Activated naive CD4-positive, alpha-beta T cell treated with anti-CD3 and anti-CD28 coated beads for 36 hours (primary cell): ENCODE measurements at regions of chr1 and their contacts with region 1.

Region 1: DNA sequence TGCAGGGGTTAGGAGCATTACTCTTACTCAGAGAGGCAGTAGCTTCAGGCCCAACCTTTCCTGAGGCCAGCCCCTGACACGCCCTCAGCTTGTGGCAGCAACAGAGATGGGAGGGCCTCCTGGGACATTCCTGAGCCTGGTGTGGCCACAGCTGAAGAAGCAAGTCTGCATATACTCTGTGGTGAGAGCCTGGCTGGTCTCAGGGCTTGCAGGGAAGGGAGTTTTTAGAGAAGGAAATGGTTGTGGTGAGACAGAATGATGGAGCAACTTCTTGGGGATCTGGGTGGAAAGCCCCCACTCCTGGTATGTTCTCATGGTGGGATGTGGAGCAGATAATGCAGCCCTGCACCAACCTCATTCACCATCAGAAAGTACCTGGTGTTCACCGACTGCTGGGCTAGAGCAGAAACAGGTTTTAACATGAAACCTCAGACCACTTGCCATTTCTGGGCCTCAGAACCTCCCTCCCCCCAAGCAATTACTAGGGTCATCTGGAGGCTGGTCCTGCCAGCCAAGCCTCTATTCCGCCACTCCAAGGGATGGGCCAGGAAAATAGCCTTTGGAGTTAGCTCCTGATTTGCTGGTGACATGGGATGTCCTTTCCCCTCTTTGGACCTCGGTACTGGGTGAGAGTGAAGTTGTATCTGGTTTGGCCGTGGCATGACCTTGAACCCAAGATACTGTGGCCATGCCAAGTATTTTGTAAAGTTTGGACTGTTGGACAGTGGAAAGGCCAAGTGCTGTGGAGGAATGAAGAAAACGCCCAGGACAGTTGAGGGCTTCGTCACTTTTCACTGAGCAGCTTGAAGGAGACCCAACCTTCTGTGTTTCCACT is 28.1 kb upstream of the RNF19B start:
- DNase-seq: peak; percentile 89
- H3K4me3 Mint-ChIP-seq: no peak overlapping the region
- H3K27ac Mint-ChIP-seq: peak overlapping the region; percentile 73
- H3K4me1 Mint-ChIP-seq: peaks cover 32% of the 10 kb centered on the region
- H3K27me3 Mint-ChIP-seq: no peaks in the 10 kb centered on the region

Region 2: DNA sequence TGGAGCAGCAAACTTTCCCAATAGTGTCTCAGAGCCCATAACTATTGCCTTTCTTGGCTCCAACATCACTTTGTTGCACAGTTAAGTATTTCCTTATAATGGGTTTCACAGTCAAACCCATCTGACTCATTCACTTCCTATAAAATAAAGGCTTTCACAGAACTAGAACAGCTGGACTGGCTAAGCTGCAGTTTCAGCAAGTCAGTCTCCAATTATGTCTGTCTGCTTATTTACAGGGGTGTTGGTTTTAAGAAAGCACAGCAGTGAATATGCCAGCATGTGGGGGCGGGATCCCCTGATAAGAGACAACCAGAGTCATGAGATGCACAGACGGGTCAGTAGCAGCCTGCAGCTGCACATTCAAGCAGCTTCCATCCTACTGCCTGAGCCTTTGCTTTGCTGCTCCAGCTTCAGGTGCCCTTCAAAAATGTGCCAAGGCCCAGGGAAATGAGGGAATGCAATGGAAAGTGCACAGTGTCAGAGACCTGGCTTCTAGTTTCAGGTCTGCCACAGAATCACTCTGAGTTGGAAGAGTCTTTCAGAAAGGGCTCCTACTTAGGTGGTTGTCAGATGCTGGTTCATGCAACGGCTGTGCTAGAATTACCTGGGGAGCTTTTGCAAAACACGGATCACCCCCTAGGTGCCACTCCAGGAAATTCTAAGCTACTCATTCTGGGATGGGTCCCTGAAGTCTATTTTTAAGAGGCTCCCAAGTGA is 52.9 kb before region 1 on chr1:
- CTCF ChIA-PET with region 1: no interaction called
- intact Hi-C with region 1: loop called (anchors 5 kb)
- DNase-seq: peak; percentile 30
- H3K4me3 Mint-ChIP-seq: no peak overlapping the region
- H3K27ac Mint-ChIP-seq: no peak overlapping the region
- H3K4me1 Mint-ChIP-seq: peaks cover 27% of the 10 kb centered on the region
- H3K27me3 Mint-ChIP-seq: no peaks in the 10 kb centered on the region

Region 3: DNA sequence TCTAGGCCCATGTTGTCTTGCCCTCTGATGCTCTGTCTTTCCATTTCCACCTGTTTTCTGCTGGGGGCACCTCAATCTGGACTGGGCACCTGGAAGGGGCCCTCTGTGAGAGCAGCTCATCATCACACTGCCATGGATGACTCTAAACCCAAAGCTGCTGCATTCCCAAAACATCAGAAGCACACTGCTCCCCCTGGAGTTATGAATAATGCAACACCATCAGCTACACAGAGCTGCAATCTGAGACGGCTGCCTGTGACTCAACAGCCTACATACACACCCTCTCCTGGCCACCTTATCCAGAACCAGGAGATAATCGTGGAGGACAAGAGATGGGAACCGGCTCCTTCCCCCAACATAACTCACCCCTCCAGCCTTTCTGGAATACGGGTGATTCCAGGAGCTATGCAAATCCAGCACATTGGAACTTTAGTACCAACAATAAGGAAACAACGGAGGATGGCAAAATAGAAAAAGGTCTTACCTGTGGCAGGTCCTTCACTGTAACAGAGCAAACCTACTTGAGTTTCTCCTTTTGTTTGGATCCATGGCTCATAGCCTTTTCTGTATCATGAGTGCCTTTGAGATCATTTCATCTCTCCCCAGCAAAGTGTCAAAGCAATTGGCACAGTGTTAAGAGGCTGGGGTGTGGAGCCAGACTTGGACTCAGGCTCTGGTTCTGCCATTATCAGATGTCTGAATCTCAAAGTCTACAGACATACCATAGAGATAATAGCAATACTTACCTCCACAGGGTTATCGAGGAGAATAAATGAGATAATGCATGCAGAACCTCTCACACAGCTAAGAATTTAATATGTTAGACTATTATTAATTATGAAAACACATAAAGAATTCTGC is 14.7 kb after region 1 on chr1:
- CTCF ChIA-PET with region 1: no interaction called
- intact Hi-C with region 1: loop called (anchors 1 kb)
- DNase-seq: peak; percentile 28
- H3K4me3 Mint-ChIP-seq: no peak overlapping the region
- H3K27ac Mint-ChIP-seq: peak overlapping the region; percentile 47
- H3K4me1 Mint-ChIP-seq: peaks cover 23% of the 10 kb centered on the region
- H3K27me3 Mint-ChIP-seq: no peaks in the 10 kb centered on the region

Region 4: GRCh38 chr1:33256701-33257399 is 264.1 kb after region 1 on chr1:
- CTCF ChIA-PET with region 1: no interaction called
- intact Hi-C with region 1: no loop called
- DNase-seq: peak; percentile 54
- H3K4me3 Mint-ChIP-seq: peak overlapping the region; percentile 96
- H3K27ac Mint-ChIP-seq: peak overlapping the region; percentile 91
- H3K4me1 Mint-ChIP-seq: peaks cover 35% of the 10 kb centered on the region
- H3K27me3 Mint-ChIP-seq: no peaks in the 10 kb centered on the region